ENCODE measurements at regions of chr6 and their contacts with region 1.

Region 1: DNA sequence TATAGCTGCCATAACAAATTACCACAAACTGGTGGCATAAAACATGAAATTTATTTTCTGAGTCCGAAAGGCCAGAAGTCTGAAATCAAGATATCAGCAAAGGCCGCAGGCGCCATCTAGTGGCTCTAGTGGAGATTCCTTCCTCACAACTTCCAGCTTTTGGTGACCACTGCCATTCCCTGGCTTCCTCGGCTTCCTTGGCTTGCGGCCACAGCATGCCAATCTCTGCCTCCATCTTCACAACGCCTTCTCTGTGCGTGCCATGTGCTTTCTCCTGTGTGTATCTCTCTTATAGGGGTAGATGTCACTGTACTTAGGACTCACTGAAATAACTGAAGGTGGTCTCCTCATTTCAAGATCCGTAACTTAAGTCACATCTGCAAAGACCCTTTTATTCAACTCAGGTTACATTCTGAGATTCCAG is 5.4 kb upstream of the PLAGL1 start:
- DNase-seq: peak; percentile 28
- ATAC-seq: peak; percentile 31
- H3K4me3 Mint-ChIP-seq: no peak overlapping the region
- H3K27ac Mint-ChIP-seq: no peak overlapping the region
- H3K4me1 Mint-ChIP-seq: peaks cover 2% of the 10 kb centered on the region
- H3K27me3 Mint-ChIP-seq: no peaks in the 10 kb centered on the region
- CTCF ChIP-seq: peak; percentile 90

Region 2: GRCh38 chr6:142474531-142475289 is 1538.8 kb before region 1 on chr6:
- CTCF ChIA-PET with region 1: interaction called, 5 read pairs
- POLR2A ChIA-PET with region 1: no interaction called
- intact Hi-C with region 1: loop called (anchors 1 kb)
- DNase-seq: no peak
- ATAC-seq: peak; percentile 54
- H3K4me3 Mint-ChIP-seq: no peak overlapping the region
- H3K27ac Mint-ChIP-seq: no peak overlapping the region
- H3K4me1 Mint-ChIP-seq: no peaks in the 10 kb centered on the region
- H3K27me3 Mint-ChIP-seq: peaks cover 3% of the 10 kb centered on the region
- CTCF ChIP-seq: peak; percentile 81

Region 3: DNA sequence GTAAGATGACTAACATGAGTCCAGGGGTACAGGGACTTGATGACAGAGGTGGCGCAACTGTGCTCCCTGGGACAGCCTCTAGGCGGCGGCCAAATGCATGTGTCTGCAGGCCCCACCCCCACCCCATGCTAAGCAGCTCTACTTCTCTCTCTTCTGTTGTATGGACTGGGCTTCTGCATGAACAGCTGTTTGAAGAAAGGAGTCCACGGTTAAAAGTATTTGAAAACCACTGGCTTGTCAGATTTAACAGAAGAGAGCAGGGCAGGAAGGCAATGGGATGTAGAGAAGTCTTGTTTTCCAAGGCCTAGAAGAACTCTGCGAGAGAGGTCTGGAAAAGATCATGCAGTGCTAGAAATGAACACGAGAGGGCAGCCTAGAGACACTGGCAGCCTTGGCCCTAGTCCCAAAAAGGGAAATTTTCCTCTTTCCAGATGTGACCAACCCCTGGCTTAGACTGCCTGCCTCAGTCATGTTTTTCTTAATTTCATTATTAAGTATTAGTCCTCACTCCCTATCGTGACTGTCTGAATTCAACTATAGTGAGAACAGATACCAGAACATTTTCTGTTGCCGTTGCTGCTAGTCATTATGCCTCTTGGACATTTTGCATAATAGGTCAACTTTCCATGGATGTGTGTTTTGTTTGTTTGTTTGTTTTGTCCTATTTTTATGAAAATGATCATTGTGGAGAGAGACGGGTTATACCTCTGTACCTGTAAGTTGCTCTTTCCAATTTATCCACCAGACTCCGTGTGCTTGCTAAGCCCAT is 1446.7 kb before region 1 on chr6:
- CTCF ChIA-PET with region 1: no interaction called
- POLR2A ChIA-PET with region 1: no interaction called
- intact Hi-C with region 1: loop called (anchors 2 kb)
- DNase-seq: no peak
- ATAC-seq: peak; percentile 66
- H3K4me3 Mint-ChIP-seq: no peak overlapping the region
- H3K27ac Mint-ChIP-seq: no peak overlapping the region
- H3K4me1 Mint-ChIP-seq: no peaks in the 10 kb centered on the region
- H3K27me3 Mint-ChIP-seq: no peaks in the 10 kb centered on the region
- CTCF ChIP-seq: peak; percentile 79

Region 4: DNA sequence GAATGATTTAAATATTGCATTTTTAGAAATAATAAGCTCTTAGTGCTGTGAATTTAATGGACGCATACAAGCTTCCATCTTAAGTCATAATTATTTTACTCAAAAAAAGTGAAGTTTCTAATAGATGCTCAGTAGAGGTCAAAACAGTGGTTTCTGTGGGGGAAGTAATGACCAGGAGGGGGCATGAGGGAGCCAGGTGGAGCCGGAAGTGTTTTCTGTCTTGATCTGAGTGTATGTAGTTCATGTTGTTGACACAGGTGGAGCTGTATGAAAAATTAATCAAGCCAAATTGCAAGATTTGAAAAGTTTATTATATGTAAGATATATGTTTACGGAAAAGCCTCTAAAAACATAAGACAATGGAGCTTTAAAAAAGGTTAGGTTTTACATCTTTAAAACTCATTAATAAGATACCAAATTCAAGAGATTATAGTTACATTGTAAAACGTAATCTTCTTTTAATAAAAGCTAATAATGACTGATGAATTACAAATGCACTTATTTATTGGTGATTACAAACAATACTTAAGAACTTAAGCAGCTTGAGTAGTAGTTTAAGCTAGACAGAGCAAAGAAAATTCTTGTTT is 73.4 kb before region 1 on chr6:
- CTCF ChIA-PET with region 1: interaction called, 26 read pairs
- POLR2A ChIA-PET with region 1: no interaction called
- intact Hi-C with region 1: loop called (anchors 1 kb)
- DNase-seq: no peak
- ATAC-seq: peak; percentile 98
- H3K4me3 Mint-ChIP-seq: no peak overlapping the region
- H3K27ac Mint-ChIP-seq: no peak overlapping the region
- H3K4me1 Mint-ChIP-seq: no peaks in the 10 kb centered on the region
- H3K27me3 Mint-ChIP-seq: no peaks in the 10 kb centered on the region
- CTCF ChIP-seq: no peak

Region 5: GRCh38 chr6:144063744-144064401 is 50.4 kb after region 1 on chr6:
- CTCF ChIA-PET with region 1: interaction called, 4 read pairs
- POLR2A ChIA-PET with region 1: interaction called, 4 read pairs
- intact Hi-C with region 1: loop called (anchors 2 kb)
- DNase-seq: peak; percentile 91
- ATAC-seq: peak; percentile 93
- H3K4me3 Mint-ChIP-seq: peak overlapping the region; percentile 94
- H3K27ac Mint-ChIP-seq: peak overlapping the region; percentile 89
- H3K4me1 Mint-ChIP-seq: peaks cover 36% of the 10 kb centered on the region
- H3K27me3 Mint-ChIP-seq: no peaks in the 10 kb centered on the region
- CTCF ChIP-seq: no peak